ENCODE measurements at regions of chr3 and their contacts with region 1.

Region 1: GRCh38 chr3:151086484-151087456 is 1.3 kb downstream of the MED12L start:
- DNase-seq: peak; percentile 82
- ATAC-seq: peak; percentile 85
- H3K4me3 Mint-ChIP-seq: peak overlapping the region; percentile 80
- H3K27ac Mint-ChIP-seq: no peak overlapping the region
- H3K4me1 Mint-ChIP-seq: peaks cover 9% of the 10 kb centered on the region
- H3K27me3 Mint-ChIP-seq: peaks cover 36% of the 10 kb centered on the region
- CTCF ChIP-seq: peak; percentile 57

Region 2: GRCh38 chr3:151067158-151067557 is 19.6 kb before region 1 on chr3:
- CTCF ChIA-PET with region 1: interaction called, 25 read pairs
- POLR2A ChIA-PET with region 1: interaction called, 3 read pairs
- intact Hi-C with region 1: no loop called
- DNase-seq: peak; percentile 13
- ATAC-seq: peak; percentile 51
- H3K4me3 Mint-ChIP-seq: no peak overlapping the region
- H3K27ac Mint-ChIP-seq: no peak overlapping the region
- H3K4me1 Mint-ChIP-seq: no peaks in the 10 kb centered on the region
- H3K27me3 Mint-ChIP-seq: peaks cover 6% of the 10 kb centered on the region
- CTCF ChIP-seq: peak; percentile 49

Region 3: GRCh38 chr3:151135541-151136337 is 49.0 kb after region 1 on chr3:
- CTCF ChIA-PET with region 1: interaction called, 19 read pairs
- POLR2A ChIA-PET with region 1: no interaction called
- intact Hi-C with region 1: no loop called
- DNase-seq: peak; percentile 77
- ATAC-seq: peak; percentile 95
- H3K4me3 Mint-ChIP-seq: no peak overlapping the region
- H3K27ac Mint-ChIP-seq: peak overlapping the region; percentile 67
- H3K4me1 Mint-ChIP-seq: peaks cover 18% of the 10 kb centered on the region
- H3K27me3 Mint-ChIP-seq: no peaks in the 10 kb centered on the region
- CTCF ChIP-seq: no peak